Naive thymus-derived CD4-positive, alpha-beta T cell (primary cell): ENCODE measurements at regions of chr5 and their contacts with region 1.

Region 1: DNA sequence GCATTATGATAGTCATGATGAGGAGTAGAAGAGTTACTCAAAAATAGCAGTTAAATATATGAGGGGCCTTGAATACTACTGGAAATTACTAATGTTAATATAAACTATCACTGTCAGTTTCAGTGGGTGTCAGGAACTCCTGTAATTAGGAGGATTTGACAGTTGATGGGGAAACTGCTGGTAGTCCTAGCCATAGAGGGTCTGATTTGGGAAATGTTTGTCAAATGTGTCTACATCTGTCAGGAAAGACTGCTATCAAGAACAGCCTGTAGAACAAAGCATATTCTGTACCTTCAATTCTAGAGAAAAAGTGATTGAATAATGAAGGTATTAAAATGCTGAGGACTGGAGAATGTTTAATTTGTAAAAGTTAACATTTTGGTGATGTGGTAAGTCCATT is 567.9 kb downstream of the CDH9 start:
- DNase-seq: no peak
- ATAC-seq: no peak
- H3K4me3 ChIP-seq: no peak overlapping the region
- H3K4me3 Mint-ChIP-seq: no peak overlapping the region
- H3K27ac ChIP-seq: no peak overlapping the region
- H3K27ac Mint-ChIP-seq: no peak overlapping the region
- H3K4me1 ChIP-seq: no peaks in the 10 kb centered on the region
- H3K4me1 Mint-ChIP-seq: no peaks in the 10 kb centered on the region
- H3K27me3 ChIP-seq: no peaks in the 10 kb centered on the region
- H3K27me3 Mint-ChIP-seq: no peaks in the 10 kb centered on the region

Region 2: DNA sequence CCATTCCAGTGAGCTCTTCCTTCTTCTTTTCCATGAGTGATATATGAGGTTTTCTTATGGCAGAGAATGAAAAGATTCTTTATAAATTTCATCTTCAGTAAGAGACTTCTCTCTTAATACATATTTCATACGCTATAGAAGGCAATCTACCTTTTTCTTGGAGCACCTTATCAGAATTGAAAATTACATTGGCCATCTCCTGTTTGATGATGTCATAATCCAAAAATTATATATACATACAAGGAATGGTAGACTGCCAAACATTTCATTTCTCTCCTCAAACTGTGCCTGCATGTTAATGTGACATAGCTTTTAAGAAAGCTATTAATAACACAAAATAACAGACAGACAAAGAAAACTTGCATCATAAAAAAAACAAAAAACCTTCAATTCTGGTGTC is 64.1 kb before region 1 on chr5:
- CTCF ChIA-PET with region 1: no interaction called
- POLR2A ChIA-PET with region 1: no interaction called
- intact Hi-C with region 1: loop called in 1 of 2 experiments (anchors 2 kb)
- DNase-seq: no peak
- ATAC-seq: no peak
- H3K4me3 ChIP-seq: no peak overlapping the region
- H3K4me3 Mint-ChIP-seq: no peak overlapping the region
- H3K27ac ChIP-seq: no peak overlapping the region
- H3K27ac Mint-ChIP-seq: no peak overlapping the region
- H3K4me1 ChIP-seq: no peaks in the 10 kb centered on the region
- H3K4me1 Mint-ChIP-seq: no peaks in the 10 kb centered on the region
- H3K27me3 ChIP-seq: no peaks in the 10 kb centered on the region
- H3K27me3 Mint-ChIP-seq: no peaks in the 10 kb centered on the region

Region 3: GRCh38 chr5:26530305-26530704 is 59.9 kb after region 1 on chr5:
- CTCF ChIA-PET with region 1: no interaction called
- POLR2A ChIA-PET with region 1: no interaction called
- intact Hi-C with region 1: no loop called
- DNase-seq: no peak
- ATAC-seq: no peak
- H3K4me3 ChIP-seq: no peak overlapping the region
- H3K4me3 Mint-ChIP-seq: no peak overlapping the region
- H3K27ac ChIP-seq: no peak overlapping the region
- H3K27ac Mint-ChIP-seq: no peak overlapping the region
- H3K4me1 ChIP-seq: no peaks in the 10 kb centered on the region
- H3K4me1 Mint-ChIP-seq: no peaks in the 10 kb centered on the region
- H3K27me3 ChIP-seq: no peaks in the 10 kb centered on the region
- H3K27me3 Mint-ChIP-seq: no peaks in the 10 kb centered on the region

Region 4: DNA sequence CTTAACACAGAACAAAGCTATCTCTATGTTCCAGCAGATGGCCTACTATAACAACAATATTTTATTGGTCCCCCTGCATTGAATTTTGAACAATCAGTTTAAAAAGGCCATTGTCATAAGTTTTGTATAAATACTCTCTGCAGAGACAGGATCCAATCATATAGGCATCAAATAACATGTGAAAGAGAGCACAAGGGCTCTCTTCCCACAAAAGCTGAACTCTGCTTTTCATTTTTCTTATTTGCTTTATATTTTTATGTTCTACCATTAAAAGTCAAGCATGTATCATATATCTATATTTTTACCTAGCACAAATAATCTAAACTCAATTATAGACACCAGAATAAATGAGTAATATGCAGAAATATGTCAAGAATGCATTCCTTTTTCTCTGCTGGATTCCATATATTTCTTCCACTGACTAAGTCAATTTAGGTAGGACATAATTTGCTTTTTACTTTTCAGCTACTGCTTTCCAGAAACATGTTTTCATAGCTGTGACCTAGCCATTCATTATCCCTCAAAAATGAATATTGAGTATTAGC is 424.4 kb after region 1 on chr5:
- CTCF ChIA-PET with region 1: no interaction called
- POLR2A ChIA-PET with region 1: no interaction called
- intact Hi-C with region 1: no loop called
- DNase-seq: no peak
- ATAC-seq: no peak
- H3K4me3 ChIP-seq: no peak overlapping the region
- H3K4me3 Mint-ChIP-seq: no peak overlapping the region
- H3K27ac ChIP-seq: no peak overlapping the region
- H3K27ac Mint-ChIP-seq: no peak overlapping the region
- H3K4me1 ChIP-seq: no peaks in the 10 kb centered on the region
- H3K4me1 Mint-ChIP-seq: no peaks in the 10 kb centered on the region
- H3K27me3 ChIP-seq: no peaks in the 10 kb centered on the region
- H3K27me3 Mint-ChIP-seq: no peaks in the 10 kb centered on the region